MCF 10A (cell line): ENCODE measurements at regions of chr14 and their contacts with region 1.

Region 1: GRCh38 chr14:106436310-106436905 is 910.0 kb downstream of the TMEM121 start:
- DNase-seq: peak; percentile 86
- H3K4me3 Mint-ChIP-seq: no peak overlapping the region
- H3K27ac Mint-ChIP-seq: no peak overlapping the region
- H3K4me1 Mint-ChIP-seq: no peaks in the 10 kb centered on the region
- H3K27me3 Mint-ChIP-seq: peaks cover 59% of the 10 kb centered on the region
- CTCF ChIP-seq: peak; percentile 38

Region 2: GRCh38 chr14:106459971-106460730 is 23.7 kb after region 1 on chr14:
- CTCF ChIA-PET with region 1: no interaction called
- POLR2A ChIA-PET with region 1: no interaction called
- intact Hi-C with region 1: no loop called
- DNase-seq: peak; percentile 37
- H3K4me3 Mint-ChIP-seq: no peak overlapping the region
- H3K27ac Mint-ChIP-seq: no peak overlapping the region
- H3K4me1 Mint-ChIP-seq: no peaks in the 10 kb centered on the region
- H3K27me3 Mint-ChIP-seq: peaks cover under 1% of the 10 kb centered on the region
- CTCF ChIP-seq: peak; percentile 37

Region 3: GRCh38 chr14:106530423-106531107 is 94.2 kb after region 1 on chr14:
- CTCF ChIA-PET with region 1: no interaction called
- POLR2A ChIA-PET with region 1: no interaction called
- intact Hi-C with region 1: loop called (anchors 10 kb)
- DNase-seq: no peak
- H3K4me3 Mint-ChIP-seq: no peak overlapping the region
- H3K27ac Mint-ChIP-seq: no peak overlapping the region
- H3K4me1 Mint-ChIP-seq: no peaks in the 10 kb centered on the region
- H3K27me3 Mint-ChIP-seq: peaks cover 43% of the 10 kb centered on the region
- CTCF ChIP-seq: peak; percentile 7

Region 4: GRCh38 chr14:106622200-106622745 is 185.9 kb after region 1 on chr14:
- CTCF ChIA-PET with region 1: no interaction called
- POLR2A ChIA-PET with region 1: no interaction called
- intact Hi-C with region 1: no loop called
- DNase-seq: no peak
- H3K4me3 Mint-ChIP-seq: no peak overlapping the region
- H3K27ac Mint-ChIP-seq: no peak overlapping the region
- H3K4me1 Mint-ChIP-seq: no peaks in the 10 kb centered on the region
- H3K27me3 Mint-ChIP-seq: peaks cover 76% of the 10 kb centered on the region
- CTCF ChIP-seq: no peak